Stomach (tissue), 19 donors: ENCODE measurements at regions of chr18 and their contacts with region 1.

Region 1: GRCh38 chr18:59459369-59460079 is 100.5 kb upstream of the LMAN1 start:
- DNase-seq: peak in 1 of 2 donors; percentile 60
- H3K4me3 ChIP-seq: no peak overlapping the region
- H3K27ac ChIP-seq: no peak overlapping the region
- H3K4me1 ChIP-seq: peaks cover 0 to 8% (median 7%) of the 10 kb centered on the region in 4 donors
- H3K27me3 ChIP-seq: peaks cover 0 to 20% (median 0%) of the 10 kb centered on the region in 3 donors
- CTCF ChIP-seq: peak in 5 of 7 experiments; percentile 24 to 57 (median 33)
- EP300 ChIP-seq: no peak
- POLR2A ChIP-seq: no peak

Region 2: GRCh38 chr18:59823596-59824195 is 364.2 kb after region 1 on chr18:
- intact Hi-C with region 1: loop called (anchors 5 kb)
- DNase-seq: peak; percentile 76 to 87
- H3K4me3 ChIP-seq: no peak overlapping the region
- H3K27ac ChIP-seq: no peak overlapping the region
- H3K4me1 ChIP-seq: no peaks in the 10 kb centered on the region
- H3K27me3 ChIP-seq: peaks cover 0 to 19% (median 0%) of the 10 kb centered on the region in 3 donors
- CTCF ChIP-seq: peak in 5 of 7 experiments; percentile 64 to 83 (median 80)
- EP300 ChIP-seq: no peak
- POLR2A ChIP-seq: no peak